ENCODE measurements at regions of chr5 and their contacts with region 1.

Region 1: DNA sequence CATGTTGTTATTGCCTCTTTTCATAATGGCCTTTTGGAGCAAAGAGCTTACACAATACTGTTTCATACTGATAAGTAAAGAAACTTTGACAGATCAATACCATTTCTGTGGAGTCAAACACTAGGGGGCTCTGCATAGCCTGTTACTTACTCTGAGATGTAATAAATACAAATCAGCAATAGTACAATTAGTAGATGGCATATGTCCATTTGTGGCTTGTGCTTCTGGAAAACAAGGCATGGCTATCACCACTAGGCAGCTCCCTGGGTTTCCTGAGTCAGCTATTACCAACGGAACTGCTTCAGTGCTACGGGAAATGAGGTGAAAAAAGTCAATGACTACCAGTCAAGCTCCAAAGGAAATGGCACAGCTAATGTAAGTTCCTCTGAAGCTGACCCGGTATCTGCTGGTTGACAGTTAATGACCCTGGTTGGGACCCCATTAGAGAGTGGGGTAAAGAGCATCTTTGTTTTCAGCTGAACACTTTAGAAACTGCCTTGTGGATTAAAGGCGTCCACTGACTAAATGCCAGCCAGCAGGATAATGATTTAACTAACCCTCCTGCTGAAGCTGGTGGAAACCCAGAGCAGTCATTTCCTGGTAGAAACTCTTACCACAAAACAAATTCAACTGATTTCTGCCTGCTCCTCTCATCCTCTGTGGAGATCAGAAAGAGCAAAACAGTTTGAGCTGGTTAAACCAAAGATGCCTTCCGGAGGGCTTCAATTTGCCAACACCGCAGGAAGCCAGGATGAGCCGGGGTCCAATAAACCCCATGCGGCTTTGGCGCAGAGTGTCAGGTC is 69.0 kb upstream of the FAM169A start:
- DNase-seq: no peak
- ATAC-seq: peak; percentile 78
- H3K4me3 Mint-ChIP-seq: no peak overlapping the region
- H3K27ac Mint-ChIP-seq: no peak overlapping the region
- H3K4me1 Mint-ChIP-seq: peaks cover 17% of the 10 kb centered on the region
- H3K27me3 Mint-ChIP-seq: no peaks in the 10 kb centered on the region
- CTCF ChIP-seq: no peak; the same call in 1 of the 2 replicates

Region 2: GRCh38 chr5:74919487-74919886 is 15.7 kb before region 1 on chr5:
- CTCF ChIA-PET with region 1: interaction called, 19 read pairs
- POLR2A ChIA-PET with region 1: no interaction called
- DNase-seq: no peak
- ATAC-seq: peak; percentile 65
- H3K4me3 Mint-ChIP-seq: no peak overlapping the region
- H3K27ac Mint-ChIP-seq: no peak overlapping the region
- H3K4me1 Mint-ChIP-seq: no peaks in the 10 kb centered on the region
- H3K27me3 Mint-ChIP-seq: no peaks in the 10 kb centered on the region
- CTCF ChIP-seq: peak; percentile 41; the same call in 1 of the 2 replicates

Measured in WTC11 (cell line).